ENCODE measurements at regions of chr1 and their contacts with region 1.

Region 1: GRCh38 chr1:101769520-101769919 is 227.2 kb downstream of the OLFM3 start:
- DNase-seq: no peak
- H3K4me3 ChIP-seq: no peak overlapping the region
- CTCF ChIP-seq: no peak
- POLR2A ChIP-seq: no peak

Region 2: GRCh38 chr1:101945884-101946283 is 176.4 kb after region 1 on chr1:
- intact Hi-C with region 1: loop called (anchors 5 kb)
- DNase-seq: no peak
- H3K4me3 ChIP-seq: no peak overlapping the region
- CTCF ChIP-seq: no peak
- POLR2A ChIP-seq: no peak

Measured in lower leg skin (tissue), 4 donors.